Transverse colon (tissue), 4 donors: ENCODE measurements at regions of chr13 and their contacts with region 1.

Region 1: DNA sequence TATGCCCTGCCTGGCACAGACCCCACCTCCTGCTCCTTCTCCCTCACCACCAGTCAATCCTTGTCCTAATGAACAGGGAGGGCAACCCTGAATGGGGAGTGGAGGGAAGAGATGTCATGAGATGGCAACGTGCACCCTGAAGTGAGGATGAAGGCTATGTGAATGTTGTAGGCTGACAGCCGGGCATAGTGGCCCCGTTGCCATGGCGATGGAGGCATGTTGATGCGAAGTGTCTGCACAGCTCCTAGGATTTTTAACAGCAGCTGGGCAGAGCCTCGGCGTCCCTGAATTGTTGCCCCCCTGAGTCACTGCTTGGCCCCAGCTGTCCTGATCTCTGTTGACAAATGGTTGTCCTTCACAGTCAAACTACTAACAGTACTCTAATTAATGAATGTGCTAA is 4.8 kb upstream of the ALOX5AP start:
- DNase-seq: no peak
- H3K4me3 ChIP-seq: no peak overlapping the region
- H3K27ac ChIP-seq: no peak overlapping the region
- H3K4me1 ChIP-seq: no peaks in the 10 kb centered on the region
- H3K27me3 ChIP-seq: no peaks in the 10 kb centered on the region
- CTCF ChIP-seq: no peak
- EP300 ChIP-seq: no peak
- POLR2A ChIP-seq: no peak

Region 2: DNA sequence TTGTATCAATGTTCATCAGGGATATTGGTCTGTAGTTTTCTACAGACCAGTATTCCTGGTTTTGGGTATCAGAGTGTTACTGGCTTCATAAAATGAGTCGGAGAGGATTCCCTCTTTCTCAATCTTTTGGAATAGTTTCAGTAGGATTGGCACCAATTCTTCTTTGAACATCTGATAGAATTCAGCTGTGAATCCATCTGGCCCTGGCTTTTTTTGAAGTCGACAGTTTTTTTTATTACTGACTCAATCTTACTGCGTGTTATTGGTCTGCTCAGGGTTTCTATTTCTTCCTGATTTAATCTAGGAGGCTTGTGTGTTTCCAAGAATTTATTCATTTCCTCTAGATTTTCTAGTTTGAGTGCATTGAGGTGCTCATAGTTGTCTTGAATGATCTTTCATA is 213.4 kb after region 1 on chr13:
- in situ Hi-C with region 1: no loop called
- intact Hi-C with region 1: no loop called
- DNase-seq: no peak
- H3K4me3 ChIP-seq: no peak overlapping the region
- H3K27ac ChIP-seq: no peak overlapping the region
- H3K4me1 ChIP-seq: no peaks in the 10 kb centered on the region
- H3K27me3 ChIP-seq: peaks cover 4% of the 10 kb centered on the region
- CTCF ChIP-seq: no peak
- EP300 ChIP-seq: no peak
- POLR2A ChIP-seq: no peak

Region 3: DNA sequence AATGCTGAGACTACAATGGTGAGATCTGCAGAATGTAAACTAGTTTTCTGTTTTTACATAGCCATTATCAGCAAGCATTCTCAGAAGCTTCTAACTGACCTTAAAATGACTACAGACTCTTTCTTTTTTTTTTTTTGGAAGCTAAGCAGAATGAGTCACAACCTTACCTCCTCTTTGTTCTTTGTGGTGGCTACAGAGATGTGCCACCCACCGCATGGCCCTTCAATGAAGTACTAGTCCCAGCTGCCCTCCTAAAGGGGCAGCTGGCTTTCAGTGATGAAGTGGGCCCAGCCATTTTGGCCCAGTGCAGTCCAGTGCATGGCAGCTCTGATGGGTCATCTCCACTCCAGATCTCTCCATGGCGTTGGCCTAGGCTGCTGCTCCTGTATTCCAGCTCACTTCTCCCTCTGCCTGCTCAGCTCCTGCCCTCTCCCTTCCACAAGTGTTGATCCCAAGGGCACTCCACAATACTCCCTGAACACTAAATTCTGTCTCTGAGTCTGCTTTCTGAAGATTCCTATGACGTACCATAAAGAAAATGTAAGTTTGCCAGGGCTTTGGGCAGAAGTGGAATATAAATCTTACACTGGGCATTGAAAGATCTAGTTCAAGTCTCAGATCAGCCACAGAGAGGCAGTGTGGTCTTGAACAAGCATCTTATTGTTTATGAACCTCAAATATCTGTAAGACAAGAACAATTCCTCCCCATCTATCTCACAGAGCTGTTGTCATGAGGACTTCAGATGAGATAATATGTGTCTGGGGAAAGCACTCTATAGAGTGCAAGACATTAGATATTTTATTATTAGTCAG is 1094.4 kb after region 1 on chr13:
- in situ Hi-C with region 1: no loop called
- intact Hi-C with region 1: loop called (anchors 5 kb)
- DNase-seq: no peak
- H3K4me3 ChIP-seq: no peak overlapping the region
- H3K27ac ChIP-seq: no peak overlapping the region
- H3K4me1 ChIP-seq: no peaks in the 10 kb centered on the region
- H3K27me3 ChIP-seq: no peaks in the 10 kb centered on the region
- CTCF ChIP-seq: no peak
- EP300 ChIP-seq: no peak
- POLR2A ChIP-seq: no peak